ENCODE measurements at regions of chr6 and their contacts with region 1.

Region 1: GRCh38 chr6:6547110-6547879 is 41.2 kb upstream of the LY86 start:
- DNase-seq: peak; percentile 79
- ATAC-seq: peak; percentile 85
- H3K4me3 ChIP-seq: peak overlapping the region; percentile 46; the same call in 1 of the 2 replicates
- H3K27ac ChIP-seq: peak overlapping the region; percentile 80
- H3K4me1 ChIP-seq: peaks cover 43% of the 10 kb centered on the region
- H3K27me3 ChIP-seq: no peaks in the 10 kb centered on the region
- CTCF ChIP-seq: peak; percentile 86 to 98 (median 91); a peak in 5 of 6 replicates
- EP300 ChIP-seq: no peak
- POLR2A ChIP-seq: no peak
- RAD21 ChIP-seq: peak; percentile 89

Region 2: DNA sequence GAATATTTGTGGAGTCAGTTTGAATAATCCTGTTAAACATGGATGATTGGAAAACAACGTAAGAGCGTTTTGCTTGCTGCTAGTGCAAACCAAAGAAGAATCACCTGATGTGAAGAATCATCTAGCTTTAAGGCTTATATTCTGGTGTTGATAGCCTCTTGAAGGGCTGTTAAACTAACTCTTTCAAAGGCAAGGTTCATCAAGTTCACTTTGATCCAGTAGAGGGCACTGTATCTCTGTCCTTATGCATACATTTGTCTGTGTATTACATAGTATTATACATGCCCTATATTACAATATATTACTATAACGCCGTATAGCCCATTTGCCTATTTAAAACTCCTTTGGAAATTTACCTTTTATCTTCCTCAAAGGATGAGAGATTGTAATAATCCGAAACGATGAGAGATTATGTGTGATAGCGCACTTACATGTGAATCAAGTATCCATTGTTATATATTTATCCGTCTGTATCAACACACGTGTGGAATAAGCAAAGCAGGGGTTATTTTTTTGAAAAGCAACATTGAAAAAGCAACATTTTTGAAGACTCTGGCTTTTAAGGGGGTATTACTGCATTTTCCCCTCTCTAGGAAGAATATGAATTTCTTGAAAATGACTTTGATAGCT is 489.8 kb before region 1 on chr6:
- CTCF ChIA-PET with region 1: interaction called, 96 read pairs
- POLR2A ChIA-PET with region 1: interaction called, 3 read pairs
- RAD21 ChIA-PET with region 1: interaction called, 54 read pairs
- SMC1A ChIA-PET with region 1: interaction called, 56 read pairs
- in situ Hi-C with region 1: loop called (anchors 5 kb)
- intact Hi-C with region 1: loop called (anchors 1 kb)
- DNase-seq: peak; percentile 53
- ATAC-seq: peak; percentile 97
- H3K4me3 ChIP-seq: no peak overlapping the region
- H3K27ac ChIP-seq: no peak overlapping the region
- H3K4me1 ChIP-seq: no peaks in the 10 kb centered on the region
- H3K27me3 ChIP-seq: no peaks in the 10 kb centered on the region; a peak in 2 of 4 replicates
- CTCF ChIP-seq: peak; percentile 54 to 68 (median 66); a peak in 5 of 6 replicates
- EP300 ChIP-seq: no peak
- POLR2A ChIP-seq: no peak
- RAD21 ChIP-seq: peak; percentile 74

Region 3: DNA sequence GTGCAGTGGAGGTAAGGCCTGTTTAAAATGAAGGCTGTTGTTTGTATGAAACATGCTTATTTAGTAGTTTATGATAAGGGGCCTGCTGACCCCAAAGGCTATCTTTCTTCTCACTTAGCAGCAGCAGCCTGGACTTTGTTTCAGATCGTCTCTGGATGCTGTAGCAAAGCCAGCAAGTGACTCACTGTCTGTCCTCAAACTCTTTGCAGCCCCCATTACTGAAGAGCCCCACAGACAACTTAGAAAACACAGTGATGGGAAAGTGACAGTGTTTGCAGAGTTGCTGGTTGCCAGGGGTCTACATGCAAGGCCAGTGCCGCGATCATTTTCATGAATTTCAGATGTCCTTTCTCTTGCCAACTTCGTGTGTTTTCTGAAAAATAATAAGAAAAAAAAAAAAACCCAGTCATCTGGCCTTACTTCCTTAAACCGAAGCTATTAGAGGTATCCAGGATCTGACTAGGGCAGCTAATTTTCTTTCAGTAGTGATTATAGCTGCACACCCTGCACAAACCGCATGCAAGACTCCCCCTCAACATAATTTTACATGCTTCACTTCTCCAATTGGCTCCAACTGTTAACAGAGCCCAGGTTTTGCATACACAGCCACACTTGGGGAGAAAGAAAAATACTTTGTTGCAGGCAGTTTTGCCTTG is 215.2 kb before region 1 on chr6:
- CTCF ChIA-PET with region 1: interaction called, 5 read pairs
- POLR2A ChIA-PET with region 1: no interaction called
- RAD21 ChIA-PET with region 1: interaction called, 11 read pairs
- SMC1A ChIA-PET with region 1: interaction called, 28 read pairs
- in situ Hi-C with region 1: loop called (anchors 5 kb)
- intact Hi-C with region 1: loop called (anchors 1 kb)
- DNase-seq: peak; percentile 95
- ATAC-seq: peak; percentile 81
- H3K4me3 ChIP-seq: peak overlapping the region; percentile 40; the same call in 1 of the 2 replicates
- H3K27ac ChIP-seq: peak overlapping the region; percentile 97
- H3K4me1 ChIP-seq: peaks cover 38% of the 10 kb centered on the region
- H3K27me3 ChIP-seq: no peaks in the 10 kb centered on the region
- CTCF ChIP-seq: no peak
- EP300 ChIP-seq: peak in 1 of 2 experiments; percentile 64; a peak in 3 of 4 replicates
- POLR2A ChIP-seq: no peak
- RAD21 ChIP-seq: 0 out of 2 replicates have a peak, but pooled peaks have one; percentile 3

Region 4: GRCh38 chr6:6494677-6495076 is 52.6 kb before region 1 on chr6:
- CTCF ChIA-PET with region 1: interaction called, 60 read pairs
- POLR2A ChIA-PET with region 1: interaction called, 3 read pairs
- RAD21 ChIA-PET with region 1: interaction called, 52 read pairs
- SMC1A ChIA-PET with region 1: interaction called, 13 read pairs
- in situ Hi-C with region 1: no loop called
- intact Hi-C with region 1: loop called (anchors 1 kb)
- DNase-seq: peak; percentile 45
- ATAC-seq: peak; percentile 100
- H3K4me3 ChIP-seq: no peak overlapping the region
- H3K27ac ChIP-seq: no peak overlapping the region
- H3K4me1 ChIP-seq: no peaks in the 10 kb centered on the region
- H3K27me3 ChIP-seq: no peaks in the 10 kb centered on the region
- CTCF ChIP-seq: peak; percentile 74 to 84 (median 78)
- EP300 ChIP-seq: no peak
- POLR2A ChIP-seq: no peak
- RAD21 ChIP-seq: peak; percentile 86

Region 5: GRCh38 chr6:6533176-6533575 is 14.1 kb before region 1 on chr6:
- CTCF ChIA-PET with region 1: interaction called, 15 read pairs
- POLR2A ChIA-PET with region 1: interaction called, 3 read pairs
- RAD21 ChIA-PET with region 1: interaction called, 6 read pairs
- SMC1A ChIA-PET with region 1: interaction called, 16 read pairs
- in situ Hi-C with region 1: no loop called
- intact Hi-C with region 1: no loop called
- DNase-seq: no peak
- ATAC-seq: no peak
- H3K4me3 ChIP-seq: no peak overlapping the region
- H3K27ac ChIP-seq: no peak overlapping the region
- H3K4me1 ChIP-seq: no peaks in the 10 kb centered on the region
- H3K27me3 ChIP-seq: no peaks in the 10 kb centered on the region
- CTCF ChIP-seq: no peak
- EP300 ChIP-seq: no peak
- POLR2A ChIP-seq: no peak
- RAD21 ChIP-seq: no peak

Measured in GM12878 (cell line).